ENCODE measurements at regions of chr12 and their contacts with region 1.

Region 1: GRCh38 chr12:69639400-69640016 is 28.8 kb upstream of the LRRC10 start:
- DNase-seq: peak; percentile 73
- H3K4me3 ChIP-seq: no peak overlapping the region
- H3K27ac ChIP-seq: no peak overlapping the region
- H3K4me1 ChIP-seq: peaks cover 0 to 3% of the 10 kb centered on the region in 2 experiments; a peak in 1 of 4 replicates
- H3K27me3 ChIP-seq: no peaks in the 10 kb centered on the region
- CTCF ChIP-seq: peak; percentile 93
- EP300 ChIP-seq: no peak
- RAD21 ChIP-seq: peak; percentile 80

Region 2: GRCh38 chr12:69359531-69360347 is 279.8 kb before region 1 on chr12 and contains the start of gene YEATS4:
- CTCF ChIA-PET with region 1: interaction called, 10 read pairs
- POLR2A ChIA-PET with region 1: no interaction called
- DNase-seq: peak; percentile 92
- H3K4me3 ChIP-seq: peak within 1 kb of the TSS; percentile 83 to 90
- H3K27ac ChIP-seq: peak within 1 kb of the TSS; percentile 93
- H3K4me1 ChIP-seq: peaks cover 4 to 6% of the 10 kb centered on the region in 2 experiments; a peak in 3 of 4 replicates
- H3K27me3 ChIP-seq: no peaks in the 10 kb centered on the region
- CTCF ChIP-seq: no peak
- EP300 ChIP-seq: no peak
- RAD21 ChIP-seq: no peak
- polyA plus RNA-seq, gene YEATS4: 11.4 and 13.2 TPM in 2 replicates

Region 3: GRCh38 chr12:69457433-69457832 is 182.1 kb before region 1 on chr12:
- CTCF ChIA-PET with region 1: no interaction called
- POLR2A ChIA-PET with region 1: no interaction called
- DNase-seq: no peak
- H3K4me3 ChIP-seq: no peak overlapping the region
- H3K27ac ChIP-seq: no peak overlapping the region
- H3K4me1 ChIP-seq: no peaks in the 10 kb centered on the region
- H3K27me3 ChIP-seq: no peaks in the 10 kb centered on the region
- CTCF ChIP-seq: no peak
- EP300 ChIP-seq: no peak
- RAD21 ChIP-seq: no peak

Region 4: DNA sequence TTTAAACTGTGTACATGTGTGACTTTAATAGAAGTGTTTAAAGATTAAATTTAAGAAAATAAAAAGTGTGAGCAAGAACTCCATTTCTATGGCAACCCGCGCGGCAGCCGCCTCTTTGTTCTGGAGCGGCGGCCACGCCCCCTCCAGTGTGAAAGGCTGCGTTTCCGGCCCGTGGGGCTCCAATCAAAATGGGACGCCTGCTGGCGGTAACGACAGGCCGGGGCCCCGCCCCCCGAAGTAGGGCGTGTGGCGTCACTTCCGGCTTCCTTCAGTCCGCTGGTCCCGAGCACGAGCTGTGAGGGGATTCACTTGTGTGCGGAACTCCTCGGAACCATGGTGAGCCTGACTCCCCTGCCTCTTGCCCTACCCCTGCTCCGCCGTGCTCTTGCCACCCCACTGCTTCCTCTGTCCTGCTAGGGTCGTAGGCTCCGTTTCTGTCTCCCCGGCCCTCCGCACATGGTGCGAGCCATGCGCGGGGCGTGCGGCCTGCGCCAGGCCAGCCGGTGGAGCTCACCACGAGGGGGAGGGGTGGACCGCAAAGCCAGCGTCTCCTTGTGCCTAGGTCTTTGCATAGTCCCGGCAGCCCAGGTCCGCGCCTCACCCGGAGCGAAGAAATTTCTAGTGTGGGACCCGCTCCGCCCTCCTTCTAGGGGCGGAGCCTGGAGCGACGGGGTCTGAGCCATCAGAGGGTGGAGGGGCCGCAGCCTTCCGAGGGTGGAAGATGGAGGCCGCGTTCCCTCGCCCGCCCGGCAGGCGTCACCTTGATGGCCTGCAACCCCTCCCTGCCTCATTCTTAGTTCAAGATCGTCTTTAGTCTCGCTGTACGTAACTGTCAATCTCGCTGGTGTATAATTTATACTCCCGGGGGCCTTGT is 54.1 kb before region 1 on chr12 and contains the start of gene CCT2:
- CTCF ChIA-PET with region 1: interaction called, 16 read pairs
- POLR2A ChIA-PET with region 1: no interaction called
- DNase-seq: peak; percentile 95
- H3K4me3 ChIP-seq: peak within 1 kb of the TSS; percentile 88 to 99
- H3K27ac ChIP-seq: peak within 1 kb of the TSS; percentile 86 to 96
- H3K4me1 ChIP-seq: peaks cover 5 to 6% of the 10 kb centered on the region in 2 experiments; a peak in 3 of 4 replicates
- H3K27me3 ChIP-seq: no peaks in the 10 kb centered on the region
- CTCF ChIP-seq: peak; percentile 45
- EP300 ChIP-seq: no peak
- RAD21 ChIP-seq: peak; percentile 36
- polyA plus RNA-seq, gene CCT2: 181 and 242 TPM in 2 replicates

Region 5: DNA sequence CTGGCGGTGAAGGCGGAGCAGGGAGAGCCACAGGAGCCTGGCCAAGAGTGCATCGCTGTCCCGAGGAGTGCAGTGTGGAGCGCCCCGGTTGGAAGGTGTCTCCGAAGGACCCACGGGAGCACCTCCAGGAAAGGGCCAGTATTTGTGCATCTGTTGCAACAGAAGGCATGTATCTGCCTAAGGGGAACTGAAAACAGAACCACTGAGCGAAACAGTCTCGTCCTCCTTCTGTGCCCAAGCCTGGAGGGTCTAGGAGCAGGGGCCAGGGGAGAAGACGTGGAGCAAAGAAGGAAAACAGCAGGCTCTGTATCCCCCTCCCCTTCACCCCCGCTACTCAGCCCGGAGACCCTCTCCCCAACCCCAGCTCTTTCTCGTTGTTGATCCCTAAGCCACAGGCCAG is 23.5 kb before region 1 on chr12:
- CTCF ChIA-PET with region 1: interaction called, 45 read pairs
- POLR2A ChIA-PET with region 1: no interaction called
- DNase-seq: no peak
- H3K4me3 ChIP-seq: no peak overlapping the region
- H3K27ac ChIP-seq: no peak overlapping the region
- H3K4me1 ChIP-seq: peaks cover 0 to 3% of the 10 kb centered on the region in 2 experiments; a peak in 1 of 4 replicates
- H3K27me3 ChIP-seq: no peaks in the 10 kb centered on the region; the same call in 1 of the 2 replicates
- CTCF ChIP-seq: no peak
- EP300 ChIP-seq: no peak
- RAD21 ChIP-seq: no peak

Region 6: DNA sequence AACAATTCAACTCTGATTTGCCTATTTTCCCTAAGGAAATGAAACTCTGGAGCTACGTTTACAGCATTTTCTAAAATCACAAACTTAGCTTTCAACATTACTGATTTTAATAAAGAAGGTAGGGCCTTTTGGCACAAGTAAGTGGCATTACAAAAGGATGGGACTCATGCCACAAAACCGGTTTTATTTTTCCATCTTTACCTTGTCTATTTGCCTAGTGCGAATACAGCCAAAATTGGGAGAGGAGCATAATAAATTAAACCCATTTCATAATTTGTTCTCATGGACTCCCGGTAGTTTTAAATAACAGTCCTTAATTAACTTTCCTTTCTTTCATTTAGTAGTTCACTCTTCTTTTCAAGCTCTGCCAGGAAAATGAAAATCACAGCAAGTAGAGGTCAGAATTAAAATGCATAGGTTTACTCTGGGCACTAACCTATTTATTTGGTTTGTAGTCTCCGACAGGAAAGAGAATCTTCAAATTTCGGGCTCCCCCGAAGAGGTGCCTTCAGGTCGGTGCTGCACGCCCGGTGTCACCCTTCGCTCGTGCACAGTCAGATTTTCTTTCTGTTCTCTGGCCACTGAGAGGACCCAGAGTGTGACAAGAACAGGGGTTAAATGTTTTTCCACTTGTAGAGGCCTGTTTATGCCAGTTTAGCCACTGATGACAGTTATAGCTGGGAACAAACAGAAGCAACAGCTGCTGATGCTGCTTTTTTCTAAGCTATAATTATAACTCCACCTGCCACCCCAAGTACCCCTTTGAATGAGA is 59.4 kb after region 1 on chr12 and contains the start of gene BEST3:
- CTCF ChIA-PET with region 1: no interaction called
- POLR2A ChIA-PET with region 1: no interaction called
- DNase-seq: no peak
- H3K4me3 ChIP-seq: no peak within 1 kb of the TSS
- H3K27ac ChIP-seq: no peak within 1 kb of the TSS
- H3K4me1 ChIP-seq: no peaks in the 10 kb centered on the region
- H3K27me3 ChIP-seq: no peaks in the 10 kb centered on the region
- CTCF ChIP-seq: no peak
- EP300 ChIP-seq: no peak
- RAD21 ChIP-seq: no peak
- polyA plus RNA-seq, gene BEST3: 0.48 and 0.75 TPM in 2 replicates

Region 7: GRCh38 chr12:70317781-70318180 is 678.3 kb after region 1 on chr12:
- CTCF ChIA-PET with region 1: no interaction called
- POLR2A ChIA-PET with region 1: no interaction called
- DNase-seq: no peak
- H3K4me3 ChIP-seq: no peak overlapping the region
- H3K27ac ChIP-seq: no peak overlapping the region; a peak in 1 of 4 replicates
- H3K4me1 ChIP-seq: no peaks in the 10 kb centered on the region; a peak in 1 of 4 replicates
- H3K27me3 ChIP-seq: no peaks in the 10 kb centered on the region
- CTCF ChIP-seq: no peak
- EP300 ChIP-seq: no peak
- RAD21 ChIP-seq: no peak